MCF 10A (cell line): ENCODE measurements at regions of chr6 and their contacts with region 1.

Region 1: GRCh38 chr6:151014404-151015100 is 149.1 kb downstream of the MTHFD1L start:
- DNase-seq: peak; percentile 82
- H3K4me3 Mint-ChIP-seq: no peak overlapping the region
- H3K27ac Mint-ChIP-seq: no peak overlapping the region
- H3K4me1 Mint-ChIP-seq: no peaks in the 10 kb centered on the region
- H3K27me3 Mint-ChIP-seq: no peaks in the 10 kb centered on the region
- CTCF ChIP-seq: peak; percentile 97

Region 2: GRCh38 chr6:150891888-150892485 is 122.6 kb before region 1 on chr6:
- CTCF ChIA-PET with region 1: interaction called, 7 read pairs
- POLR2A ChIA-PET with region 1: interaction called, 3 read pairs
- intact Hi-C with region 1: loop called (anchors 1 kb)
- DNase-seq: peak; percentile 72
- H3K4me3 Mint-ChIP-seq: no peak overlapping the region
- H3K27ac Mint-ChIP-seq: no peak overlapping the region
- H3K4me1 Mint-ChIP-seq: peaks cover 6% of the 10 kb centered on the region
- H3K27me3 Mint-ChIP-seq: no peaks in the 10 kb centered on the region
- CTCF ChIP-seq: peak; percentile 74

Region 3: DNA sequence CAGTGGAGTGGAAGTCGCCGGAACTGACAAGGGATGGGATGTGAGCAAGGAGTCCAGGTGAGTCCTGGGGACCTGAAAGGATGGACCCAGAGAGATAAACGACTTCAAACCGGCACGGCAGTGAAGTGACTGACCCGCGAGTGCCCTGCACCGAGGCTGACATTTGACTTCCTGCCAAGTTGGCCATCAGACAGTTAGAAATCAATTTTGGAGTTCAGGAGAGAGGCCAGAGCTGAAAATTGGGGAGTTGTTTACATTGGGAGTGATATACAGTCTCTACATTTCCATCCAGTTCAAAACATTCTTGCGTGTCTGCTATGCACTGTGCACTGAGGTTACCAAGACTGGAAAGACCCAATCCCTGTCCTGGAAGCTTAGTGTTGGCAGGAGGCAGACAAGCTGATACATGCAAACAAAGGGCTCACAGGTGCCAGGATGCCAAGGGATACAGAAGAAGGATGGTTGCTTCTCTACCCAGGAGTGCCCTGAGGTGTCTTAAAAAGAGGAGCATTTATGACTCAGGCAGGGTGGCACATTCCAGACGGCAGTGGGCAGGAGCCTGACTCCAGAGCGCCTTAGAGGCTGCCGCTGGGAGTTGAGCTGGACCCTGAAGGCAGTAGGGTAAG is 37.6 kb after region 1 on chr6:
- CTCF ChIA-PET with region 1: interaction called, 16 read pairs
- POLR2A ChIA-PET with region 1: interaction called, 10 read pairs
- intact Hi-C with region 1: no loop called
- DNase-seq: peak; percentile 95
- H3K4me3 Mint-ChIP-seq: no peak overlapping the region
- H3K27ac Mint-ChIP-seq: peak overlapping the region; percentile 73
- H3K4me1 Mint-ChIP-seq: peaks cover 16% of the 10 kb centered on the region
- H3K27me3 Mint-ChIP-seq: no peaks in the 10 kb centered on the region
- CTCF ChIP-seq: no peak

Region 4: DNA sequence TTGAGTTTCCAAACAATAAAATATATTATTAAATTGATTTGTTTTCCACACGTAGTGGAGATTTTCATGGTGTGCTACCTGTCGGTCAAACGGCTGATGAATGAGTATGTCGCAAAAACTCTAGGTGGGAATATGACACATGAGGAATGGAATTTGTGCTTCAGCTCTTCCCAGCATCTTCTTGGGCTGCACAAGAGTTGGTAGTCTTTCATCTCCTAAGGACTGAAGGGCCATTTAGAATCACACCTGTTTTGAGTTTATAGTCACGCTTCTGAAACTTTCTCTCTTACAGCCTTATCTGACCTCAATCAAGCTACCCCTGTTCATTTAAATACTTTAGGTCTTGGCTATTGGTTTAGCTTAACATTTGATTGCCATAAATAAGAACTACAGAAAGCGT is 67.5 kb after region 1 on chr6:
- CTCF ChIA-PET with region 1: interaction called, 7 read pairs
- POLR2A ChIA-PET with region 1: interaction called, 4 read pairs
- intact Hi-C with region 1: loop called (anchors 5 kb)
- DNase-seq: peak; percentile 64
- H3K4me3 Mint-ChIP-seq: no peak overlapping the region
- H3K27ac Mint-ChIP-seq: no peak overlapping the region
- H3K4me1 Mint-ChIP-seq: peaks cover 25% of the 10 kb centered on the region
- H3K27me3 Mint-ChIP-seq: no peaks in the 10 kb centered on the region
- CTCF ChIP-seq: no peak

Region 5: DNA sequence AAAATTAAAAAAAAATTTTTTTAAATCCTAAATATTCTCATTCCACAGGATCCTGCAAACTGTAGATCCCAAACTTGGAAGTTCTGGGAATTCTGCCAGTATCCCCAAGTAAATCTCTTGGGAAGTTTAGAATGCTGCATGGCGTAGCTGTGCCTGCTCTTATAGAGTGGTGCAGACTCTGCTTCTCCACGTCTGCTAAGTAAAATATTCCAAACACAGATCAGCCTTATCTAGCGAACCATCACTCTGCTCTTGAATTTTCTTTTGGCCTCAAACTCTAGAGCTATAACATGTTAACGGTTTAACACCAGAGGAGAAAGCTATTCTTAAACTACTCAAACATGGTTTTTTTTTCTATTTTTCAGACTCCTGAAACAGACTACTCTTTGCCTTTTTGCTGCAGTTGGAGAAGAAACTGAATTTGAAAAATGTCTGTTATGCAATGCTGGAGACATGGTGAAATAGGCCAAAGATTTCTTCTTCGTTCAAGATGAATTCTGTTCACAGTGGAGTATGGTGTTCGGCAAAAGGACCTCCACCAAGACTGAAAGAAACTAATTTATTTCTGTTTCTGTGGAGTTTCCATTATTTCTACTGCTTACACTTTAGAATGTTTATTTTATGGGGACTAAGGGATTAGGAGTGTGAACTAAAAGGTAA is 86.7 kb after region 1 on chr6:
- CTCF ChIA-PET with region 1: no interaction called
- POLR2A ChIA-PET with region 1: no interaction called
- intact Hi-C with region 1: no loop called
- DNase-seq: no peak
- H3K4me3 Mint-ChIP-seq: no peak overlapping the region
- H3K27ac Mint-ChIP-seq: no peak overlapping the region
- H3K4me1 Mint-ChIP-seq: no peaks in the 10 kb centered on the region
- H3K27me3 Mint-ChIP-seq: no peaks in the 10 kb centered on the region
- CTCF ChIP-seq: no peak

Region 6: DNA sequence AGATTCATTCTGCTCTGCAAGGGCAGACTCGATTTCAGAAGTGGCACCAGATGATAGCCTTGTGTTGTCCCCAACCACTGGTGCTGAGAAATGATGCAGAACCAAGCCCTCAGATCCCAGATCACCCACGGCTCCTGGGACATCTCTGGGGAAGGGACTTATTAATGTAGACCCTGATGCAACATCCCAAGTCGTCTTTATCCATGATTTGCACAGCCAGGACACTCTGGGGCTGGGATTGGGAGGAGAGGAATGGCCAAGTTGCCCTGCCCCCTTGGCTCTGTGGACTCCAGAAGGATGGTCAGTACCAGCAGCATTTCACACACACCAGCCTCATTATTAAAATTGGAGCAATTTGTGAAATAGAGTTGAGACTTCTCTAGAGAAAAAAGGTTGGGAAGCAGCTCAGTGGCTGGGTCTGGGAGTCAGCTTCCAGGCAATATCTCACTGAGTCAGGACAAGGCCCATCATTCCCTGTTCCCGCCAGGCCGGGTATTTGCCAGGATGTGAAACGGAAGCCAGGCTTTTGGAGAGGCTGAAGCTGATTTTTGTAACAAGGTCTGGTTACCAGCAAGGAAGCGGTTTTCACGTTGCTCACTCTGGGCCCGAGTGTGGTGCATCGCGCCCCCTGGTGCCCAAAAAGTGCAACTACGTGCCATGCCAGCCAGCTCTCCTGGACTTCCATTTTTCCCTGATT is 309.4 kb after region 1 on chr6:
- CTCF ChIA-PET with region 1: interaction called, 293 read pairs
- POLR2A ChIA-PET with region 1: interaction called, 27 read pairs
- intact Hi-C with region 1: loop called (anchors 1 kb)
- DNase-seq: peak; percentile 78
- H3K4me3 Mint-ChIP-seq: no peak overlapping the region
- H3K27ac Mint-ChIP-seq: no peak overlapping the region
- H3K4me1 Mint-ChIP-seq: peaks cover 20% of the 10 kb centered on the region
- H3K27me3 Mint-ChIP-seq: no peaks in the 10 kb centered on the region
- CTCF ChIP-seq: peak; percentile 95